CD8-positive, alpha-beta memory T cell (primary cell): ENCODE measurements at regions of chr6 and their contacts with region 1.

Region 1: DNA sequence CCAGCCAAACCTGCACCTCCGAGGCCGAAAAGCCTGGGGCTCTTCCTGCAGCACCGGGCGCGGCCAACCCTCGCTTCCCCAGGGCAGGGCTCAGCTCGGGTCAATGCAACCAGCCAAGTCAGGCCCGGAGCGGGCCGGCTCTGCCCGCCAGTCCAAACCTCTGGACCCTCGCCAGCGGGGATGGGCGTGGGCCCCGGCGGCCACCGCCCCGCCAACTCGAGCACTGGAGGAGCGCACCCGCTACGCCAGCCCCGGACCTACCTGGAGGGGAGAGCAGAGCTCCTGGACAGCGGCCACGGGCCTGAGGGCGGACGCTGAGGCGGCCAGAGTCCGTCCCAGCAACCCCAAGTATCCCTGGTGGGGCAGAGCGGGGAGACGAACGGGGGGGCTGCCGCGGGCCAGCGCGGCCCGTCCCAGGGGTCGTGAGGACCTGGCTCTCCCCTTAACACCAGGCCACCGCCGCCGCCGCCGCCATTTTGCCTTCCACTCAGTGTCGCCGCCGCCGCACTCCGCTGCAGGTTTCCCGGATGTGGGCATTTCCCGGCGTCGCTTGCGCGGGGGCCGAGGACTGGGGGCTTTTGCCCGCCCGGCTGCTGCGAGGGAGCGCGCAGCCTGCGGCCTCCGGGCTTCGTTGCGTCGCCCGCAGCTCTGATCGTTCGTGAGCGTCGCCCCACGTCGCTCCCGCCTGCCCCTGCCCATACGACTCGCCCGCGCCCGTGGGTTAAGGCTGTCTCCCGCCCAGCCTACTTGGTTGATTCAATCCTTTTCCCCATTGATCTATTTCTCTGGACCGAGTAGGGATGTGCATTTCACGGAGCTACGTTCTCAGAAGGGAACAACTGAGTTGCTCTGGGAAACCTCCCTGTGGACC is at the start of gene LATS1:
- DNase-seq: peak; percentile 90 to 94 (median 91)
- H3K4me3 ChIP-seq: peak within 1 kb of the TSS; percentile 87
- H3K4me3 Mint-ChIP-seq: peak within 1 kb of the TSS; percentile 91 to 99 (median 97)
- H3K27ac ChIP-seq: peak within 1 kb of the TSS; percentile 88
- H3K27ac Mint-ChIP-seq: peak within 1 kb of the TSS; percentile 96 to 100 (median 98)
- H3K4me1 ChIP-seq: peaks cover 15% of the 10 kb centered on the region
- H3K4me1 Mint-ChIP-seq: peaks cover 41 to 59% (median 51%) of the 10 kb centered on the region in 3 donors
- H3K27me3 ChIP-seq: no peaks in the 10 kb centered on the region
- H3K27me3 Mint-ChIP-seq: no peaks in the 10 kb centered on the region
- total RNA-seq, gene LATS1: 29.7 to 33.8 TPM

Region 2: DNA sequence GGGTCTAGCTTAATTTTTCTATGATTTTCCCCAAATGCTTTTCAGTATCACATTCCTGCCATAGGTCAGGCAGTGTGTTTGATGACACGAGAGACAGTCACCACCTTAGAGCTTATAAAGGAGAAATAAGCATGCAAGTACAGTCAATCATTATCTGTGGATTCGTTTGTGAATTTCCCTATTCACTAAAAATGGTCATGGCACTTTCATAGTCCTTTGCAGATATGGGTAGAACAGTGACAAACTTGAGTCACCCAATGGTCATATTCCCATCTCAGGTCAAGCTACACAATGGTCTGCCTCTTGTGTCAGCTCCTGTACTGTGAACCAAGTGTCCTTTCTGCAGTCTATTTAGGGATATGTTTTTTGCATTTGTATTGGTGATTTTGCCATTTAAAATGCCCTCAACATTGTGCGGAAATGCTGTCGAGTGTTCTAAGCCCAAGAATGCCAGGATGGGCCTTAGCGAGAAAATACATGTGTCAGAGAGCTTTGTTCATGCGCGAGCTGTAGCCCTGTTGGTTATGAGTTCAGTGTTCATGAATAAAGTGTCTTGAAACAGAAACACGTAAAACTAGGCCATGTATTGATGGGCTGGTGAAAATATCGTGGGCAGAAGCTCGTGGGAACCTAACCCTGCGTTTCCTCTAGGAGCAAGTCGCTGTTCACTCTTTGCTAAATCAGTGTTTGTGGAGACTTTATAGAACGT is 298.0 kb before region 1 on chr6:
- CTCF ChIA-PET with region 1: no interaction called
- POLR2A ChIA-PET with region 1: interaction called, 12 read pairs
- DNase-seq: no peak
- H3K4me3 ChIP-seq: no peak overlapping the region
- H3K4me3 Mint-ChIP-seq: no peak overlapping the region
- H3K27ac ChIP-seq: no peak overlapping the region
- H3K27ac Mint-ChIP-seq: no peak overlapping the region
- H3K4me1 ChIP-seq: no peaks in the 10 kb centered on the region
- H3K4me1 Mint-ChIP-seq: peaks cover 9 to 21% (median 17%) of the 10 kb centered on the region in 3 donors
- H3K27me3 ChIP-seq: no peaks in the 10 kb centered on the region
- H3K27me3 Mint-ChIP-seq: peaks cover 0 to 13% of the 10 kb centered on the region in 2 donors

Region 3: DNA sequence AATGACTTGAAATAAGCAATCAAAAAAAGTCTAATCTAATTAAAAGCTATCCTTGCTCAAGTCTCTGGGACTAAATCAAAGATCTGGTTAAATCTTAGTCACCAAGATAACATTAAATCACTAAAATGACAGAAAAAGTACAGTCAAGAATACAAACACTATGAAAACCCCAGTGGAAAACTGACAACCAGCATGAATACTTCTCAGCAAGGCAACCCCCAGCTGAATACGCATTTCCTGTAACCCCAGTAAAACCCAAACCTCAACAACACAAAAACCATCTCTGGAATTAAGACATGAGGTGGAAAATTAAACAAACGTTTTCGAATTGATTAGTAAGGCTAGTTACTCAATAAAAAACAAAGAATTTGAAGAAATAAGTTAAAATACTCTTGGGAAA is 209.3 kb before region 1 on chr6:
- CTCF ChIA-PET with region 1: no interaction called
- POLR2A ChIA-PET with region 1: no interaction called
- DNase-seq: peak in 3 of 5 donors; percentile 57 to 72 (median 65)
- H3K4me3 ChIP-seq: no peak overlapping the region
- H3K4me3 Mint-ChIP-seq: peak overlapping the region in 5 of 7 donors; percentile 9 to 73 (median 41)
- H3K27ac ChIP-seq: no peak overlapping the region
- H3K27ac Mint-ChIP-seq: peak overlapping the region in 7 of 8 donors; percentile 65 to 92 (median 83)
- H3K4me1 ChIP-seq: peaks cover 18% of the 10 kb centered on the region
- H3K4me1 Mint-ChIP-seq: peaks cover 25 to 30% (median 30%) of the 10 kb centered on the region in 3 donors
- H3K27me3 ChIP-seq: no peaks in the 10 kb centered on the region
- H3K27me3 Mint-ChIP-seq: no peaks in the 10 kb centered on the region

Region 4: DNA sequence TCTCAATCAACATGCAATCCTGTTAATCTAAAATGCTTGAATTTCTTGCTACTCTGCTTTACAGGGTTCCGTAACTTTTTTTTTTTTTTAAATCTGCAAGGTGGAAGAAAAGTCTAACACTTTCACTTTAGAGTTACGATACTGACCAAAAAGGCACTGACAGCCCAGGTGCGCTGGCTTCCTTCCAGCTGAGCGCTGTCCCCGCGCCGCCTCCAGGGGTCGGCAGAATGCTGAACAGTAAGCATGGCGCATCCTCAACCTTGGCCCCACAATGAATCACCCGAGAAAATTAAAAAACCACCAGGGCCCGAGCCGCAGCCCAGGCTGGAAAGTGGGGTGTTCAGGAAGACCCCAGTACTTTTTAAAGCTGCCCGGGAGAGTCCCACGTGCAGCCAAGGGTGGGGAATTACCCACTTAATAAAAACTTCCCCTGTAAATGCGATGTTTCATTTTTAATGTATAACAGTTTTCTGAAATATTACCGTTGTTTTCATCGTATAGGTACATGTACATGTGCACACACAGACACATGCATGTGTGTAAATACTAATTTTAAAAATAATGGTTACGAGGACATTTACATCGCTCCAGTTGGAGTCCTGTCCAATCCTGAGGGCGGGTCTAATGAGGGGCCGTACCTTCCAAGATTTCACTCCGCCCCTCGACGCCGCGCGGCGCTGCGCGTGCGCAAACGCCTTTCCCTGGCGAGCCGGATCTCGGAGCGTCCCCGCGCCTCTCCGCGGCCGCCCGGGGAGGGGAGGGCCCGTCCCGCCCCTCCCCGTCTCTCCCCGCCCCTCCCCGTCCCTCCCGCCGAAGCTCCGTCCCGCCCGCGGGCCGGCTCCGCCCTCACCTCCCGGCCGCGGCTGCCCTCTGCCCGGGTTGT is 152.1 kb before region 1 on chr6 and contains the start of gene GINM1:
- CTCF ChIA-PET with region 1: interaction called, 5 read pairs
- POLR2A ChIA-PET with region 1: interaction called, 14 read pairs
- DNase-seq: peak; percentile 90 to 96 (median 95)
- H3K4me3 ChIP-seq: peak within 1 kb of the TSS; percentile 97
- H3K4me3 Mint-ChIP-seq: peak within 1 kb of the TSS; percentile 91 to 99 (median 96)
- H3K27ac ChIP-seq: peak within 1 kb of the TSS; percentile 83
- H3K27ac Mint-ChIP-seq: peak within 1 kb of the TSS; percentile 92 to 98 (median 96)
- H3K4me1 ChIP-seq: peaks cover 16% of the 10 kb centered on the region
- H3K4me1 Mint-ChIP-seq: peaks cover 17 to 42% (median 25%) of the 10 kb centered on the region in 3 donors
- H3K27me3 ChIP-seq: no peaks in the 10 kb centered on the region
- H3K27me3 Mint-ChIP-seq: peaks cover 0 to 4% of the 10 kb centered on the region in 2 donors
- total RNA-seq, gene GINM1: 20.4 to 20.5 TPM

Region 5: DNA sequence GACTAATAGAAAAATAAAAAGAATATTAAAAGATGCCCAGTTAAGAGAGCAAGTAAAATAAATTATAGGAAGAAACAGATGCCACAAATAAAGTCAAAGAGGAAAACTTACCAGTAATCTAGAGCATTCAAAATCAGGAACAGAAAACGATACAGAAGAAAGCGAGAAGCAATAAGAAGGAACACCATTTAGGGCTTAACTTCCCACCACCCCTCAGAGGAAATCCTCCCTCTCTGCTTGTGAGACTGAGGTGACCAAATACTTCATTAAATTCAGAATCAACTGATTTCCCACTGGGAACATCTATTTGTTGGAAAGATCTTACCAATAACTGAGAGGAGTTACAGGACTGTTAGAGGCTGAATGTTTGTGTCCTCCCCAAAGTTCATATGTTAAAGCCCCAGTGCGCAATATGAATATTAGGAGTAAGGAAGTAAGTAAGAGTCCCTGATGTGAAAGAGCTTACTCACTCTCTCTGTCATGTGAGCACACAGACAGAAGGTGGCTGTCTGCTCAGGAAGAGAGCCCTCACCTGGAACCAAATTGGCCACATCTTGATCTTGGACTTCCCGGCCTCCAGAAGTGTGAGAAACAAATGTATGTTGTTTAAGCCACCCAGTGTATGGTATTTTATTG is 88.8 kb before region 1 on chr6:
- CTCF ChIA-PET with region 1: no interaction called
- POLR2A ChIA-PET with region 1: no interaction called
- DNase-seq: no peak
- H3K4me3 ChIP-seq: no peak overlapping the region
- H3K4me3 Mint-ChIP-seq: no peak overlapping the region
- H3K27ac ChIP-seq: no peak overlapping the region
- H3K27ac Mint-ChIP-seq: peak overlapping the region in 5 of 8 donors; percentile 11 to 65 (median 39)
- H3K4me1 ChIP-seq: no peaks in the 10 kb centered on the region
- H3K4me1 Mint-ChIP-seq: peaks cover 0 to 5% (median 2%) of the 10 kb centered on the region in 3 donors
- H3K27me3 ChIP-seq: no peaks in the 10 kb centered on the region
- H3K27me3 Mint-ChIP-seq: no peaks in the 10 kb centered on the region

Region 6: GRCh38 chr6:149746147-149746946 is 28.5 kb after region 1 on chr6 and contains the start of gene NUP43:
- CTCF ChIA-PET with region 1: interaction called, 16 read pairs
- POLR2A ChIA-PET with region 1: interaction called, 20 read pairs
- DNase-seq: peak; percentile 80 to 94 (median 87)
- H3K4me3 ChIP-seq: peak within 1 kb of the TSS; percentile 65
- H3K4me3 Mint-ChIP-seq: peak within 1 kb of the TSS; percentile 94 to 99 (median 95)
- H3K27ac ChIP-seq: peak within 1 kb of the TSS; percentile 70
- H3K27ac Mint-ChIP-seq: peak within 1 kb of the TSS; percentile 83 to 100 (median 92)
- H3K4me1 ChIP-seq: peaks cover 29% of the 10 kb centered on the region
- H3K4me1 Mint-ChIP-seq: peaks cover 28 to 42% (median 35%) of the 10 kb centered on the region in 3 donors
- H3K27me3 ChIP-seq: no peaks in the 10 kb centered on the region
- H3K27me3 Mint-ChIP-seq: peaks cover 0 to 4% of the 10 kb centered on the region in 2 donors
- total RNA-seq, gene NUP43: 82.3 to 86.2 TPM

Region 7: DNA sequence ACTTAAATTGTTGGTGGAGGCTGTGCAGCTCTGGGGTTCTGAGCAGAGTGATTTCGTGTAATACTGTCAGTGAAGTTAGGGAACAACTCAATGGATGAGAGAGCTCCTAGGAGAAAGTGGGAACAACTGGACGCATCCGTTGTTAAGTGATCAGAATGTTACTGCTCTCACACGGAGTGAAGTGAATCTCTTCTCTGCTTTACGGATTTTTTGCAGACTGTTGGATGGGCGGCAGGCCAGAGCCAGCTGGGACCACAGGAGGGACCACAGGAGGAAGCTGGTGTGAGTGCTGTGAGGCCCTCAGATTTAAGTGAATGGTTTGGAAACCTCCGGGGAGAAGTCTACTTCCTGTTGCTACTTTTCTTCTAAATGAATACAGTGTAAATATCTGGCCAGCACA is 401.4 kb after region 1 on chr6:
- CTCF ChIA-PET with region 1: no interaction called
- POLR2A ChIA-PET with region 1: no interaction called
- DNase-seq: no peak
- H3K4me3 ChIP-seq: no peak overlapping the region
- H3K4me3 Mint-ChIP-seq: no peak overlapping the region
- H3K27ac ChIP-seq: no peak overlapping the region
- H3K27ac Mint-ChIP-seq: peak overlapping the region in 1 of 8 donors; percentile 28
- H3K4me1 ChIP-seq: no peaks in the 10 kb centered on the region
- H3K4me1 Mint-ChIP-seq: peaks cover 4 to 25% (median 16%) of the 10 kb centered on the region in 3 donors
- H3K27me3 ChIP-seq: no peaks in the 10 kb centered on the region
- H3K27me3 Mint-ChIP-seq: peaks cover 6 to 12% of the 10 kb centered on the region in 2 donors